ENCODE measurements at regions of chr17 and their contacts with region 1.

Region 1: GRCh38 chr17:67602956-67603355 is 114.8 kb upstream of the NOL11 start:
- DNase-seq: no peak
- ATAC-seq: peak; percentile 97
- H3K4me3 ChIP-seq: no peak overlapping the region
- H3K27ac ChIP-seq: peak overlapping the region; percentile 46
- H3K4me1 ChIP-seq: peaks cover 33% of the 10 kb centered on the region
- H3K27me3 ChIP-seq: no peaks in the 10 kb centered on the region
- CTCF ChIP-seq: peak; percentile 70 to 87 (median 73); a peak in 5 of 6 replicates
- EP300 ChIP-seq: no peak
- POLR2A ChIP-seq: no peak
- RAD21 ChIP-seq: peak; percentile 95

Region 2: DNA sequence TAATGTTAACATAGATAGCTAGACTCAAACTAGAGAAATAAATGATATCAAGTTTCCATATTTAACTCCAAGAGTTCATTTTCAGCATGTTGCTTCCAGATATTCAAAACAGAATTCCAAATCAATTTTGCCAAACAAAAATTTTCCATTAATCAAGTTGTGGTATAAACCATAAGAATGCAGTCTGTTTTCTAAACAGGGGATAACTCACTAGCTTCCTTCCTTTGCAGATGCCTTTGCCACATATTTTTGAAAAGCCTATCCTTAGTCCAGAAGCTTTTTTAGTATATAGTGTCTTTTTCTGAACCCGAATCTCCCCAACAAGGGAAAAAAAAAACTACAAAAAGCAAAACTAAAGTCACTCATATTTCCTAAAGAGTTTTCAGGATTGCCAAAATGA is 419.4 kb before region 1 on chr17:
- CTCF ChIA-PET with region 1: no interaction called
- POLR2A ChIA-PET with region 1: no interaction called
- RAD21 ChIA-PET with region 1: no interaction called
- SMC1A ChIA-PET with region 1: no interaction called
- in situ Hi-C with region 1: no loop called
- intact Hi-C with region 1: no loop called
- DNase-seq: no peak
- ATAC-seq: no peak
- H3K4me3 ChIP-seq: no peak overlapping the region
- H3K27ac ChIP-seq: no peak overlapping the region
- H3K4me1 ChIP-seq: no peaks in the 10 kb centered on the region
- H3K27me3 ChIP-seq: no peaks in the 10 kb centered on the region
- CTCF ChIP-seq: no peak
- EP300 ChIP-seq: no peak
- POLR2A ChIP-seq: no peak
- RAD21 ChIP-seq: no peak

Region 3: GRCh38 chr17:67390646-67391384 is 212.1 kb before region 1 on chr17:
- CTCF ChIA-PET with region 1: interaction called, 16 read pairs
- POLR2A ChIA-PET with region 1: no interaction called
- RAD21 ChIA-PET with region 1: interaction called, 4 read pairs
- SMC1A ChIA-PET with region 1: interaction called, 17 read pairs
- in situ Hi-C with region 1: no loop called
- intact Hi-C with region 1: no loop called
- DNase-seq: peak; percentile 87
- ATAC-seq: peak; percentile 97
- H3K4me3 ChIP-seq: peak overlapping the region; percentile 24; the same call in 1 of the 2 replicates
- H3K27ac ChIP-seq: peak overlapping the region; percentile 80
- H3K4me1 ChIP-seq: peaks cover 36% of the 10 kb centered on the region
- H3K27me3 ChIP-seq: no peaks in the 10 kb centered on the region
- CTCF ChIP-seq: peak in 1 of 3 experiments; percentile 8; a peak in 1 of 6 replicates
- EP300 ChIP-seq: peak; percentile 78 to 85; a peak in 3 of 4 replicates
- POLR2A ChIP-seq: peak; percentile 41; the same call in 1 of the 2 replicates
- RAD21 ChIP-seq: peak; percentile 9; the same call in 1 of the 2 replicates

Region 4: GRCh38 chr17:67481808-67482207 is 121.1 kb before region 1 on chr17:
- CTCF ChIA-PET with region 1: interaction called, 34 read pairs
- POLR2A ChIA-PET with region 1: interaction called, 3 read pairs
- RAD21 ChIA-PET with region 1: interaction called, 4 read pairs
- SMC1A ChIA-PET with region 1: interaction called, 17 read pairs
- in situ Hi-C with region 1: no loop called
- intact Hi-C with region 1: no loop called
- DNase-seq: no peak
- ATAC-seq: no peak
- H3K4me3 ChIP-seq: no peak overlapping the region
- H3K27ac ChIP-seq: no peak overlapping the region
- H3K4me1 ChIP-seq: peaks cover 17% of the 10 kb centered on the region
- H3K27me3 ChIP-seq: no peaks in the 10 kb centered on the region
- CTCF ChIP-seq: no peak
- EP300 ChIP-seq: no peak
- POLR2A ChIP-seq: no peak
- RAD21 ChIP-seq: no peak

Region 5: DNA sequence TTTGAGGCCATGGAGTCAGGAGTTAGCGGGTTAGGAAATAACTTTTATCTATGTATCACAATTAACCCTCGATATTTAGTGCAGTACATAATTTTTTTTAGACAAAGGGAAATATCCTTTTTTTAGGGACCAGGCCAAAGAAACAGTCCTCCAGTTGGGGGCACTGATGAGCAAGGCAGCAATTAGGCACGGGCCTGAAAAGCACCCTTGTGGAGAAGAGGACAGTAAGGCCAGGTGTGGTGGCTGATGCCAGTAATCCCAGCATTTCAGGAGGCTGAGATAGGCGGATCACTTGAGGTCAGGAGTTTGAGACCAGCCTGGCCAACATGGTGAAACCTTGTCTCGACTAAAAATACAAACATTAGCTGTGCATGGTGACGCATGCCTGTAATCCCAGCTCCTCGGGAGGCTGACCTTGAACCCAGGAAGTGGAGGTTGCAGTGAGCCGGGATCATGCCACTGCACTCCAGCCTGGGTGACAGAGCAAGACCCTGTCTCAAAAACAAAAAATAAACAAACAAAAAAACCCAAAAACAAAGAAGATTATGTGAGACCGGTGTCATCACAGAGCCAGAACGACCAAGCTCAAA is 43.5 kb before region 1 on chr17:
- CTCF ChIA-PET with region 1: interaction called, 100 read pairs
- POLR2A ChIA-PET with region 1: interaction called, 8 read pairs
- RAD21 ChIA-PET with region 1: interaction called, 52 read pairs
- SMC1A ChIA-PET with region 1: interaction called, 89 read pairs
- in situ Hi-C with region 1: no loop called
- intact Hi-C with region 1: loop called (anchors 1 kb)
- DNase-seq: no peak
- ATAC-seq: peak; percentile 90
- H3K4me3 ChIP-seq: no peak overlapping the region
- H3K27ac ChIP-seq: no peak overlapping the region
- H3K4me1 ChIP-seq: peaks cover 5% of the 10 kb centered on the region
- H3K27me3 ChIP-seq: no peaks in the 10 kb centered on the region
- CTCF ChIP-seq: peak; percentile 53 to 66 (median 60)
- EP300 ChIP-seq: no peak
- POLR2A ChIP-seq: no peak
- RAD21 ChIP-seq: peak; percentile 65

Region 6: GRCh38 chr17:67629971-67630320 is 27.0 kb after region 1 on chr17:
- CTCF ChIA-PET with region 1: interaction called, 37 read pairs
- POLR2A ChIA-PET with region 1: no interaction called
- RAD21 ChIA-PET with region 1: interaction called, 9 read pairs
- SMC1A ChIA-PET with region 1: interaction called, 24 read pairs
- in situ Hi-C with region 1: no loop called
- intact Hi-C with region 1: no loop called
- DNase-seq: no peak
- ATAC-seq: peak; percentile 72
- H3K4me3 ChIP-seq: no peak overlapping the region
- H3K27ac ChIP-seq: no peak overlapping the region; the same call in 1 of the 2 replicates
- H3K4me1 ChIP-seq: peaks cover 15% of the 10 kb centered on the region
- H3K27me3 ChIP-seq: no peaks in the 10 kb centered on the region
- CTCF ChIP-seq: peak; percentile 47 to 53 (median 52); a peak in 4 of 6 replicates
- EP300 ChIP-seq: no peak
- POLR2A ChIP-seq: no peak
- RAD21 ChIP-seq: peak; percentile 68

Region 7: DNA sequence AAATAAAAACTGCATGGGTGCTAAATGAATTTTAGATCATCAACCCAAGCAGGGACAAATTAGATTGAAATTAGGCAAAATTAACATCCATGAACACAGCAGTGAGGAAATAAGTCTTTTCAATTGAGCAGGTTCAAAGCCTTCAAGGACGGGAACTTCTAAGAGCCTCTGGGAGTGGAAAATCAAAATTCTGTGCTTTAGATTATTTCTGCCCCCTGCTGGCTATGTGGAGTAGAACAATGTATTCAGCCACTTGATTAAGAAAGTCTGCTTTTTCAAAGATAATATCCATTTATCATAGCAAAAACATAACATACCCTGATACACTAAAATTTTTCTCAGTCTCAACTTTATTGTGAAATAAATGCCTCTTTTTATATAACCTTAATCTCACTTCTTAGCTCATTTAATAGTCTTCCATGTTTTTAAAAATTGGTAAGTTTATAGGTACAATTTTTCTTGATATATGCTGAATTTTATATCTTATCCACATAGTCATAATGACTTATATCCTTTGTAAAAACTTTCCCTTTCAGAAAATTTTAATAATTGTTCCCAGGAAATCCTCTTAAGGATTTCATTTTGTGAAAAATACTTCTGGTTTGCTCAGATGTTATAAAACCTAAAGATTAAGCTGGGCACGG is 86.7 kb after region 1 on chr17:
- CTCF ChIA-PET with region 1: interaction called, 42 read pairs
- POLR2A ChIA-PET with region 1: no interaction called
- RAD21 ChIA-PET with region 1: interaction called, 15 read pairs
- SMC1A ChIA-PET with region 1: interaction called, 11 read pairs
- in situ Hi-C with region 1: no loop called
- intact Hi-C with region 1: no loop called
- DNase-seq: peak; percentile 37
- ATAC-seq: peak; percentile 82
- H3K4me3 ChIP-seq: no peak overlapping the region
- H3K27ac ChIP-seq: peak overlapping the region; percentile 24; the same call in 1 of the 2 replicates
- H3K4me1 ChIP-seq: peaks cover 10% of the 10 kb centered on the region
- H3K27me3 ChIP-seq: no peaks in the 10 kb centered on the region
- CTCF ChIP-seq: peak; percentile 63 to 73 (median 72)
- EP300 ChIP-seq: no peak
- POLR2A ChIP-seq: no peak
- RAD21 ChIP-seq: peak; percentile 85

Measured in GM12878 (cell line).